ENCODE measurements at regions of chr19 and their contacts with region 1.

Region 1: DNA sequence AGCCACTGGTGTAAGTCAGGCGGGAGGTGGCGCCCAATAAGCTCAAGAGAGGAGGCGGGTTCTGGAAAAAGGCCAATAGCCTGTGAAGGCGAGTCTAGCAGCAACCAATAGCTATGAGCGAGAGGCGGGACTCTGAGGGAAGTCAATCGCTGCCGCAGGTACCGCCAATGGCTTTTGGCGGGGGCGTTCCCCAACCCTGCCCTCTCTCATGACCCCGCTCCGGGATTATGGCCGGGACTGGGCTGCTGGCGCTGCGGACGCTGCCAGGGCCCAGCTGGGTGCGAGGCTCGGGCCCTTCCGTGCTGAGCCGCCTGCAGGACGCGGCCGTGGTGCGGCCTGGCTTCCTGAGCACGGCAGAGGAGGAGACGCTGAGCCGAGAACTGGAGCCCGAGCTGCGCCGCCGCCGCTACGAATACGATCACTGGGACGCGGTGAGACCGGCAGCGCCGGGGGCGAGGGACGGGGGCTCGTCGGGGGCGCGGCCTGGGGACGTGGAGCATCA is at the start of gene ALKBH7:
- DNase-seq: peak; percentile 82 to 99 (median 98)
- ATAC-seq: peak; percentile 83
- H3K4me3 ChIP-seq: peak within 1 kb of the TSS; percentile 89
- H3K4me3 Mint-ChIP-seq: peak within 1 kb of the TSS; percentile 82 to 92 (median 88)
- H3K27ac ChIP-seq: peak within 1 kb of the TSS; percentile 88
- H3K27ac Mint-ChIP-seq: peak within 1 kb of the TSS; percentile 66 to 95 (median 92)
- H3K4me1 ChIP-seq: peaks cover 5 to 10% of the 10 kb centered on the region in 2 donors
- H3K4me1 Mint-ChIP-seq: peaks cover 9 to 23% (median 13%) of the 10 kb centered on the region in 7 donors
- H3K27me3 ChIP-seq: no peaks in the 10 kb centered on the region
- H3K27me3 Mint-ChIP-seq: no peaks in the 10 kb centered on the region
- total RNA-seq, gene ALKBH7: 33.6 to 90.1 (median 72.9) TPM

Region 2: DNA sequence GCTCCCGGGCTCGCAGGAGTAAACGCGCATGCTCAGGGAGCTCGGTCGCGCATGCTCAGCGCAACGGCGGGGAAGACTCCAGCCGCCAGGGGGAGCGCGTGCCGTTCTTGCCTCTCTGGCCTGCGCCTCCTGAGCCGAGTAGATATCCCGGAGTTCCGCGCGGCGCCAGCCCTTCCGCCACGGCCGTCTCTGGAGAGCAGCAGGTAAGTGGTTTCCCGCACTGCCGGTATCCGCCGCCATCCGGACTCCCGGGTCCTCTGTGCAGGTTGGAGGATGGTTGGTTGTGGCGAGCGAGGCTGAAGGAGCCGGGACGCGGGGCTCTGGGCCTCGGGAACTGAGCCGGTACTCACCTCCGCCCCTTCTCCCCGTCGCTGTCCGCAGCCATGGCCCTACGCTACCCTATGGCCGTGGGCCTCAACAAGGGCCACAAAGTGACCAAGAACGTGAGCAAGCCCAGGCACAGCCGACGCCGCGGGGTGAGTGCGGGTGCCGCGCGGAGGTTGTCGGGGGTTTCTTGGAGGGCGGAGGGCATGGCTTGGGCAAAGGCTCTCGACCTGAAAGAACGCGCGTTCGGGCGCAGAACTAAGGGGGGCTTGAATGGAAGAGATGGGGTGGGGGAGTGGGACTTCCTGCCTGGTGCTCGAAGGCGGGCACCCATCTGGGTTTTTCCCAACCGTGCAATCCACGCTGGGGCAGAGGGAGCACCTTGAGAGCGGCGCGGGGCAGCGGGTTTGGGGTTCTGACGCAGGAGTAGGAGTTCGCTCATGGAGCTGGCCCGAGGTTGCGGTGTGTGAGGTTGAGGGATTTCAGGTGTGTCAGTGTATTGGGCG is 682.3 kb before region 1 on chr19 and contains the start of gene RPL36:
- CTCF ChIA-PET with region 1: no interaction called
- POLR2A ChIA-PET with region 1: no interaction called
- intact Hi-C with region 1: loop called in 1 of 2 experiments (anchors 5 kb)
- DNase-seq: peak; percentile 95 to 100 (median 99)
- ATAC-seq: peak; percentile 77
- H3K4me3 ChIP-seq: peak within 1 kb of the TSS; percentile 90
- H3K4me3 Mint-ChIP-seq: peak within 1 kb of the TSS; percentile 90 to 98 (median 94)
- H3K27ac ChIP-seq: peak within 1 kb of the TSS; percentile 85
- H3K27ac Mint-ChIP-seq: peak within 1 kb of the TSS; percentile 89 to 97 (median 93)
- H3K4me1 ChIP-seq: peaks cover 12 to 21% of the 10 kb centered on the region in 2 donors
- H3K4me1 Mint-ChIP-seq: peaks cover 5 to 39% (median 33%) of the 10 kb centered on the region in 7 donors
- H3K27me3 ChIP-seq: no peaks in the 10 kb centered on the region
- H3K27me3 Mint-ChIP-seq: no peaks in the 10 kb centered on the region
- total RNA-seq, gene RPL36: 865 to 1,786 (median 1,037) TPM

Region 3: GRCh38 chr19:6199240-6199983 is 173.2 kb before region 1 on chr19:
- CTCF ChIA-PET with region 1: no interaction called
- POLR2A ChIA-PET with region 1: no interaction called
- intact Hi-C with region 1: loop called in 1 of 2 experiments (anchors 1 kb)
- DNase-seq: peak; percentile 97 to 100 (median 99)
- ATAC-seq: peak; percentile 93
- H3K4me3 ChIP-seq: peak overlapping the region; percentile 97
- H3K4me3 Mint-ChIP-seq: peak overlapping the region; percentile 92 to 99 (median 95)
- H3K27ac ChIP-seq: peak overlapping the region; percentile 70
- H3K27ac Mint-ChIP-seq: peak overlapping the region; percentile 89 to 97 (median 91)
- H3K4me1 ChIP-seq: peaks cover 6% of the 10 kb centered on the region in 2 donors
- H3K4me1 Mint-ChIP-seq: peaks cover 5 to 20% (median 18%) of the 10 kb centered on the region in 7 donors
- H3K27me3 ChIP-seq: no peaks in the 10 kb centered on the region
- H3K27me3 Mint-ChIP-seq: peaks cover 0 to 8% (median 4%) of the 10 kb centered on the region in 5 donors

Region 4: GRCh38 chr19:6223488-6224301 is 148.9 kb before region 1 on chr19:
- CTCF ChIA-PET with region 1: no interaction called
- POLR2A ChIA-PET with region 1: no interaction called
- intact Hi-C with region 1: no loop called
- DNase-seq: no peak
- ATAC-seq: no peak
- H3K4me3 ChIP-seq: no peak overlapping the region
- H3K4me3 Mint-ChIP-seq: no peak overlapping the region
- H3K27ac ChIP-seq: no peak overlapping the region
- H3K27ac Mint-ChIP-seq: peak overlapping the region in 1 of 9 donors; percentile 38
- H3K4me1 ChIP-seq: no peaks in the 10 kb centered on the region
- H3K4me1 Mint-ChIP-seq: peaks cover 0 to 3% (median 0%) of the 10 kb centered on the region in 7 donors
- H3K27me3 ChIP-seq: no peaks in the 10 kb centered on the region
- H3K27me3 Mint-ChIP-seq: no peaks in the 10 kb centered on the region

Region 5: DNA sequence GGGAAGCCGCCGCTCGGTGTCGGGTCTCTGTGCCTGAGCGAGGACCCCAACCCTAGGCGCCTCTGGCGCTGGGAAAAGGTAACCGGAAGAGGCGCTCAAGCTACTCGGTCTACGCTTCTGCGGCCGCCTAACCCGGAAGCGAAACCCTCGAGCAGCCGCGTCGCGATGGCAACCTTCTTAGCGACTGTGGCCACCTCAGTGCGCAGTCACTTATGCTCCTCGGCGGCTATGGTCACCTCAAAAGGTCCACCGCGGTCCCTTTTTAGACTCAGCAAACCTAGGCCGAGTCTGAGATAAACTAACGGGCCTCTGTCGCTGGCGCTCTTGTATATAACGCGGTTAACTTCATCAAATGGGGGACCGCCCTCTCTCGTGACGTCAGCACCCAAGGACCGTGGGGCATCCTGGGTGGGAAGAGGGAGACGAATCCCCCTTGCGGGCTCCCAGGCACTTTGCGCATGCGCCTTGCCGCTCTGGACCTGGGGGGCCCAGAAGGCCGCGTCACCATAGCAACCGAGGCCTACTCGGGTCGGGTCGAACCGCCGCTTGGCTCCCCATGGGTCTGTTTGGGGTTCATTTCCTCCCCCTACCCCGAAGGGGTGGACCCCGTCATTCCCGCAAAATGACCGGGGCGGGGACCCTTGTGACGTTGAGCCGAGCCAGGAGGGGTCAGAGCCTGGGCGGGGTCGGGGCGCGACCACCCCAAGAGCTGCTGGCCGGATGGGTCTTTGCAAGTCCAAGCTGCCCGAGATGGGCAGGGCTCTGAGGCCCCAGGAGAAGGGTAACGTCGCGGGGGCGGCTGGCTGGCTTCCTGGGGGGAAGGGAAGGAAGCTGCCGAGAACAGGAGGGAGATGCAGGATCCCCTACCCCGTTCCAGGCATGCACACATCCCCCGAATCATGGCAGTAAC is 20.7 kb after region 1 on chr19 and contains the start of gene GTF2F1:
- CTCF ChIA-PET with region 1: interaction called, 4 read pairs
- POLR2A ChIA-PET with region 1: interaction called, 6 read pairs
- intact Hi-C with region 1: loop called (anchors 1 kb)
- DNase-seq: peak; percentile 87 to 96 (median 92)
- ATAC-seq: peak; percentile 88
- H3K4me3 ChIP-seq: peak within 1 kb of the TSS; percentile 81
- H3K4me3 Mint-ChIP-seq: peak within 1 kb of the TSS; percentile 90 to 95 (median 94)
- H3K27ac ChIP-seq: peak within 1 kb of the TSS; percentile 98
- H3K27ac Mint-ChIP-seq: peak within 1 kb of the TSS; percentile 95 to 99 (median 97)
- H3K4me1 ChIP-seq: peaks cover 8 to 12% of the 10 kb centered on the region in 2 donors
- H3K4me1 Mint-ChIP-seq: peaks cover 20 to 27% (median 25%) of the 10 kb centered on the region in 7 donors
- H3K27me3 ChIP-seq: no peaks in the 10 kb centered on the region
- H3K27me3 Mint-ChIP-seq: no peaks in the 10 kb centered on the region
- total RNA-seq, gene GTF2F1: 51.5 to 71.6 (median 61.3) TPM

Region 6: GRCh38 chr19:6476155-6476895 is 103.7 kb after region 1 on chr19:
- CTCF ChIA-PET with region 1: no interaction called
- POLR2A ChIA-PET with region 1: interaction called, 6 read pairs
- intact Hi-C with region 1: loop called in 1 of 2 experiments (anchors 1 kb)
- DNase-seq: peak; percentile 49 to 75 (median 60)
- ATAC-seq: peak; percentile 94
- H3K4me3 ChIP-seq: no peak overlapping the region
- H3K4me3 Mint-ChIP-seq: no peak overlapping the region
- H3K27ac ChIP-seq: peak overlapping the region; percentile 1
- H3K27ac Mint-ChIP-seq: peak overlapping the region in 5 of 9 donors; percentile 10 to 63 (median 38)
- H3K4me1 ChIP-seq: peaks cover 16 to 17% of the 10 kb centered on the region in 2 donors
- H3K4me1 Mint-ChIP-seq: peaks cover 15 to 27% (median 19%) of the 10 kb centered on the region in 7 donors
- H3K27me3 ChIP-seq: no peaks in the 10 kb centered on the region
- H3K27me3 Mint-ChIP-seq: no peaks in the 10 kb centered on the region

Region 7: DNA sequence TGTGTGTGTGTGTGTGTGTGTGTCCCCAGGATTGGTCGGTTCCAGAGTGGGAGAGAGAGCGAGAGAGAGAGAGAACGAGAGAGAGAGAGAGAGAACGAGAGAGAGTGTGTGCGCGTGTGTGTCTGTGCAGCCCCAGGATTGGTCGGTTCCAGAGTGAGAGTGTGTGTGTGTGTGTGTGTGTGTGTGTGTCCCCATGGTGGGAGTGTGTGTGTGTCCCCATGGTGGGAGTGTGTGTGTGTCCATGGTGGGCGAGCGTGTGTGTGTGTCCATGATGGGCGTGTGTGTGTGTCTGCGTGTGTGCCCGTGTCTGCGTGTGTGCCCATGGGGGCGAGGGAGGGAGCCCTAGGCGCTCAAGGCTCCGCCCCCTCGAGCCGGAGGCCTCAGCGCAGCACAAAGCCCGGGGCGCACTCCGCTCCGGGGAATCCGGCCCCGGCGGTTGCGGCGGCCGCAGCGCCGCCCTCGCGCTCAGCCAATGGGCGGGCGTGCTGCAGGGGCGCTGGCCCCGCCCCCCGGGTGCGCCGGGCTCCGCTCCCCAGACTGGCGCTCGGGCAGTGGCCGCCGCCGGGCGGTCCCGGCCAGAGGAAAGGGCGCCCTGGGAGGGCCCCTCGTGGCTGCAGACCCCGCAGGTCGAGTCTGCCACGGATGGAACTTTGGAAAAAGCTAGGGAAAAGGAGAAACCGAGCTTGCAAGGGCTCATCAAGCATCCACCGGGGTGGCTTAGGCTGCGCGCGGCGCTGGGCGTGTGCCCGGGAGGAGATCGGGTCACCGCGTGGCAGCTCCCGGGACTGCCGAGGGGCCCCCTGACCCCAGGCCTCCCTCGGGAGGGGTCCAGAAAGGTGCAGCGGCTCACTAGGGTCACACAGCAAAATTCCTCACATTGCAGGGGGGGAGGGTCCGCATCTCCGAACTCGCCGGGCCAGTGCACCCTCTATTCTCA is 825.4 kb after region 1 on chr19:
- CTCF ChIA-PET with region 1: no interaction called
- POLR2A ChIA-PET with region 1: no interaction called
- intact Hi-C with region 1: loop called in 1 of 2 experiments (anchors 5 kb)
- DNase-seq: peak; percentile 91 to 95 (median 94)
- ATAC-seq: peak; percentile 92
- H3K4me3 ChIP-seq: peak overlapping the region; percentile 75
- H3K4me3 Mint-ChIP-seq: peak overlapping the region; percentile 88 to 99 (median 94)
- H3K27ac ChIP-seq: peak overlapping the region; percentile 71
- H3K27ac Mint-ChIP-seq: peak overlapping the region; percentile 95 to 100 (median 97)
- H3K4me1 ChIP-seq: peaks cover 12 to 15% of the 10 kb centered on the region in 2 donors
- H3K4me1 Mint-ChIP-seq: peaks cover 0 to 20% (median 14%) of the 10 kb centered on the region in 7 donors
- H3K27me3 ChIP-seq: no peaks in the 10 kb centered on the region
- H3K27me3 Mint-ChIP-seq: peaks cover 0 to 47% (median 0%) of the 10 kb centered on the region in 5 donors

Measured in naive thymus-derived CD4-positive, alpha-beta T cell (primary cell).